ENCODE measurements at regions of chr21 and their contacts with region 1.

Region 1: GRCh38 chr21:43646550-43647260 is 12.6 kb downstream of the HSF2BP start:
- DNase-seq: peak; percentile 76 to 92 (median 80)
- ATAC-seq: peak; percentile 99
- H3K4me3 ChIP-seq: no peak overlapping the region
- H3K4me3 Mint-ChIP-seq: no peak overlapping the region
- H3K27ac ChIP-seq: no peak overlapping the region
- H3K27ac Mint-ChIP-seq: no peak overlapping the region
- H3K4me1 ChIP-seq: peaks cover 3% of the 10 kb centered on the region
- H3K4me1 Mint-ChIP-seq: peaks cover 18% of the 10 kb centered on the region
- H3K27me3 ChIP-seq: no peaks in the 10 kb centered on the region
- H3K27me3 Mint-ChIP-seq: no peaks in the 10 kb centered on the region
- CTCF ChIP-seq: peak; percentile 99

Region 2: GRCh38 chr21:42923541-42924432 is 722.9 kb before region 1 on chr21:
- CTCF ChIA-PET with region 1: no interaction called
- POLR2A ChIA-PET with region 1: no interaction called
- intact Hi-C with region 1: loop called (anchors 1 to 5 kb)
- DNase-seq: peak; percentile 33 to 85 (median 54)
- ATAC-seq: peak; percentile 77
- H3K4me3 ChIP-seq: no peak overlapping the region
- H3K4me3 Mint-ChIP-seq: peak overlapping the region; percentile 72
- H3K27ac ChIP-seq: no peak overlapping the region
- H3K27ac Mint-ChIP-seq: peak overlapping the region; percentile 73
- H3K4me1 ChIP-seq: peaks cover 18% of the 10 kb centered on the region
- H3K4me1 Mint-ChIP-seq: peaks cover 22% of the 10 kb centered on the region
- H3K27me3 ChIP-seq: no peaks in the 10 kb centered on the region
- H3K27me3 Mint-ChIP-seq: no peaks in the 10 kb centered on the region
- CTCF ChIP-seq: peak; percentile 71